ENCODE measurements at regions of chr3 and their contacts with region 1.

Region 1: DNA sequence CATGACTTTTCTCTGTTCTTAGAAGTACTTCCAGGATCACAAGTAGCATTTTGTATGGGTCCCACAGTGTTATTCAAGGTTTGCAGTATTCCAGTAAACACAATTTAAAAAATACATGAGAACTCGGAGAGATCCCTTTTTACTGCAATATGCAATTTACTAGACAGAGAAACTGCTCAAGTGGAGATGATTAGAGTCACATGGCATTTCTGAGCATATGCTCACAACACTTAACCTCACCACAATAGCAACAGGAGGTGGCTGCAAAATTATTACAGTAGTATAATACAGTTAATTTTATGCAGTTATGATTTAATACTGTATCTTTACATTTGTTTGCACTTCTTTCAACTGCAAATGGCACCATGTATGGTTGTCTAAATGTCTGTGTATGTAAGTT is 87.5 kb downstream of the PIK3CB start:
- DNase-seq: no peak
- ATAC-seq: no peak
- H3K4me3 ChIP-seq: no peak overlapping the region
- H3K27ac ChIP-seq: no peak overlapping the region
- H3K4me1 ChIP-seq: peaks cover 0 to 8% (median 0%) of the 10 kb centered on the region in 12 donors
- H3K27me3 ChIP-seq: no peaks in the 10 kb centered on the region
- CTCF ChIP-seq: no peak
- POLR2A ChIP-seq: no peak

Region 2: GRCh38 chr3:138732456-138732855 is 14.8 kb before region 1 on chr3:
- intact Hi-C with region 1: loop called in 1 of 10 experiments (anchors 1 kb)
- DNase-seq: no peak
- ATAC-seq: no peak
- H3K4me3 ChIP-seq: no peak overlapping the region
- H3K27ac ChIP-seq: no peak overlapping the region
- H3K4me1 ChIP-seq: no peaks in the 10 kb centered on the region
- H3K27me3 ChIP-seq: no peaks in the 10 kb centered on the region
- CTCF ChIP-seq: no peak
- POLR2A ChIP-seq: no peak